ENCODE measurements at regions of chr2 and their contacts with region 1.

Region 1: DNA sequence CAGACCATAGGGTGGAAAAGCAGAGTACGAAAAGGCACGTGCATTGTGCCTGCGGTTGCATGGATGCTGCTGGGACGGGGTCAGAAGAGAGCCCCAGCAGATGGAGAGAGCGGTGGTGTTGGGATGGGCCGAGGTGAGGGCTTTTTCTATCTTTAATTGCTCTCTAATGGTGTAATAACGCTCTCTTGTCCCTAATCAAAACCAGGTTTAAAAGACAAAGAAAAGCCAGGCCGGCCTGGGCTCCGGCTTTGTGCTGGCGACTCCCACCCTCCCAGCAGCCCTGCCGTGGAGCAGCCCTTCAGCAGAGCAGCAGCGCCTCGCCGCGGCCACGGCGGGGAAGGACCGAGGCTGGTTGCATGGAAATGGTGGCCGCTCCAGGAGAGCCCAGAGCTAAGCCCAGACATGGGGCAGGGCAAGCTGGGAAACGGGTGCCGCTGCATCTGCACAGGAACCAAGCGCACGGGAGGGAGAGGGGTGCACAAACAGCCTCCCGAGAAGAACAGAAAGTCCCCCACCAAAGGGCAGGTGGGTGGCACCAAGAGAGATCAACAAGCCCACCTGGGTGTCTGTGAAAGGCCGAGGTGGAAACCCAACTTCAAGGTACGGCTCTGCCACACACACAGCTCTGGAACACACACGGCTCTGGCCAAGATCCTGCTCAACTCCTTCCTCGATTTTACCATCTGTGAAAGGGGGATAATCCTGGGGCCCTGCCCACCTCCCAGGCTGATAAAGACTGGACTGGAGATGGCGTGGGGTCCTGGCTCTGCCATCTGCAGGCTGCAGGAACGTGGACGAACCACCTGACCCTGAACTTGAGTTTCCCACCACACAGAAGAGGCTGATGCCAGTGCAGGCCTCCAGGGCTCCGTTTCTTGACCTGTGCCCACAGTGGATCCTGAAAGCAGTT is 15.0 kb downstream of the HS1BP3 start:
- DNase-seq: peak; percentile 71
- ATAC-seq: peak; percentile 99
- H3K4me3 ChIP-seq: no peak overlapping the region
- H3K27ac ChIP-seq: peak overlapping the region; percentile 41; the same call in 1 of the 2 replicates
- H3K4me1 ChIP-seq: peaks cover 11% of the 10 kb centered on the region
- H3K27me3 ChIP-seq: no peaks in the 10 kb centered on the region
- CTCF ChIP-seq: peak; percentile 99
- POLR2A ChIP-seq: peak; percentile 69
- RAD21 ChIP-seq: peak; percentile 100

Region 2: DNA sequence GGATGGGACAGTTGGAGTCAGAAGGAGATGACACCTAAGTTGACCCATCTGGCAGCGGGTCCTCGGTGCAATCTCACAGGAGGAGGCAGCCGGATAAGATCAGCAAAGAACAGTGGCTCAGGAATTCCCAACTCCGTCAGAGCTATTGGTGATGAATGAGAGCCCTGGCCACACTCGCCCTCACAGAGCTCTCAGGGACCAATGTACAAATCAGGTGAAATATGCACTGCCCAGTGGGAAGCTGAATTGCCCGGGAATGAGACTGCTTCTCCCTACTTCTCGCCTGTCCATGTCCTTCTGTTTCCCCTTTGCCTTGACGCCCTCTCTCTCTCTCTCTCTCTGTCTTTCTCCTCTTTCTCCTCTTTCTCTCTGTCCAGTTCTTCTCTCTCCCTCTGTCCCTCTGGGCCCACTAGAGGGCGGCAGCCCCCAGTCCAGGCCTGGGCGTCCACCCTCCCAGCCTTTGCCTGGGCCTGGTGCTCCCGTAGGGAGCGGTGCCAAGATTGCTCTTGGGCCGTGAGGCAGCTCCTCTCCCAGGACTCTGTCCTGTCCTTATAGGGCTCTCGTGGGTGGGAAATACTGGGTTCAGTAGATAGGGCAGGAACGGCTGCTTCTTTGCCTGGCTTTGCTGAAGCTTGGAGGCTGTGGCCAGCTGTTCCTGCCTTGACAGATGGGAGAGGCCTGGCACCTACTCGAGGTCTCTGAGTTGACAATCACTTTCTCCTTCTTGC is 257.0 kb before region 1 on chr2:
- CTCF ChIA-PET with region 1: interaction called, 5 read pairs
- POLR2A ChIA-PET with region 1: no interaction called
- dilution Hi-C with region 1: loop called (anchors 25 kb)
- in situ Hi-C with region 1: no loop called
- intact Hi-C with region 1: loop called (anchors 1 kb)
- DNase-seq: peak; percentile 86
- ATAC-seq: peak; percentile 97
- H3K4me3 ChIP-seq: no peak overlapping the region
- H3K27ac ChIP-seq: peak overlapping the region; percentile 46; the same call in 1 of the 2 replicates
- H3K4me1 ChIP-seq: peaks cover 19% of the 10 kb centered on the region
- H3K27me3 ChIP-seq: no peaks in the 10 kb centered on the region
- CTCF ChIP-seq: peak; percentile 92
- POLR2A ChIP-seq: 0 out of 2 replicates have a peak, but pooled peaks have one; percentile 36
- RAD21 ChIP-seq: peak; percentile 88

Region 3: DNA sequence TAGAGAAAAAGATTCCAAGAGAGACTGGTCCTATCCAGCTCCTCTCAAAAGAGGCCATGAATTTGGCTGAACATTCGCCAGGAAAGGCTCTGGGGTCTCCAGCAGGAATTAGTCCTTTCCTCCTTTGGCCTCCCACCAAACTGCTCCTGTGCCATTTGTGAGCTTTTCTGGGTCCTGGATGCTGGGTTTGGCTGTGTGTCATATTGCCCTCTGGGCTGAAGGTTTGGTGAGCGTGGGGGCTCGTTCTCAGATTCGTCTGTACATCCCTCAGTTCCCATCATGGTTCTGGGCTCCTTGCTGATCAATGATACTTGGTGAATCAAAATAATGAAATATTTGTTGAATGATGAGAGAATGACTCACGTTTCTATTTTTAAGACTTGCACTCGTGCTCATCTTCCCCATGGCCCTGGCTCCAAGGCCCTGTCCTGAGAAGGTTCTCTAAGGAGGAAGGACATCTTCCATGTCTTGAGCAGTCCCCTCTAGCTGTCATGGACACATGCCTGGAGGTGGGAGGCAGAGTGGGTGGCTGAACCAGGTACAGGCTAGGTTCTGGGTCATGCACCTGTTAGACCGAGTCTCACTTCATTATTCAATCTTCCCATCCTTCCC is 236.9 kb before region 1 on chr2:
- CTCF ChIA-PET with region 1: interaction called, 3 read pairs
- POLR2A ChIA-PET with region 1: no interaction called
- dilution Hi-C with region 1: loop called (anchors 25 kb)
- in situ Hi-C with region 1: loop called (anchors 5 kb)
- intact Hi-C with region 1: loop called (anchors 1 kb)
- DNase-seq: peak; percentile 68
- ATAC-seq: peak; percentile 63
- H3K4me3 ChIP-seq: no peak overlapping the region
- H3K27ac ChIP-seq: no peak overlapping the region
- H3K4me1 ChIP-seq: peaks cover 4% of the 10 kb centered on the region
- H3K27me3 ChIP-seq: peaks cover 7% of the 10 kb centered on the region; the same call in 1 of the 2 replicates
- CTCF ChIP-seq: no peak
- POLR2A ChIP-seq: no peak
- RAD21 ChIP-seq: no peak

Region 4: GRCh38 chr2:20507166-20507692 is 128.7 kb before region 1 on chr2:
- CTCF ChIA-PET with region 1: no interaction called
- POLR2A ChIA-PET with region 1: no interaction called
- dilution Hi-C with region 1: no loop called
- in situ Hi-C with region 1: no loop called
- intact Hi-C with region 1: loop called (anchors 5 kb)
- DNase-seq: peak; percentile 37
- ATAC-seq: no peak
- H3K4me3 ChIP-seq: no peak overlapping the region
- H3K27ac ChIP-seq: no peak overlapping the region
- H3K4me1 ChIP-seq: peaks cover 6% of the 10 kb centered on the region; the same call in 1 of the 2 replicates
- H3K27me3 ChIP-seq: no peaks in the 10 kb centered on the region
- CTCF ChIP-seq: no peak
- POLR2A ChIP-seq: no peak
- RAD21 ChIP-seq: no peak

Region 5: GRCh38 chr2:20600756-20601325 is 35.1 kb before region 1 on chr2:
- CTCF ChIA-PET with region 1: interaction called, 4 read pairs
- POLR2A ChIA-PET with region 1: no interaction called
- dilution Hi-C with region 1: no loop called
- in situ Hi-C with region 1: no loop called
- intact Hi-C with region 1: loop called (anchors 1 kb)
- DNase-seq: no peak
- ATAC-seq: no peak; the same call in 1 of the 2 replicates
- H3K4me3 ChIP-seq: no peak overlapping the region
- H3K27ac ChIP-seq: no peak overlapping the region
- H3K4me1 ChIP-seq: peaks cover 11% of the 10 kb centered on the region
- H3K27me3 ChIP-seq: no peaks in the 10 kb centered on the region
- CTCF ChIP-seq: peak; percentile 54
- POLR2A ChIP-seq: no peak
- RAD21 ChIP-seq: peak; percentile 49

Region 6: GRCh38 chr2:20617892-20618467 is 17.9 kb before region 1 on chr2:
- CTCF ChIA-PET with region 1: interaction called, 5 read pairs
- POLR2A ChIA-PET with region 1: no interaction called
- dilution Hi-C with region 1: no loop called
- in situ Hi-C with region 1: no loop called
- intact Hi-C with region 1: loop called (anchors 2 kb)
- DNase-seq: peak; percentile 100
- ATAC-seq: peak; percentile 96
- H3K4me3 ChIP-seq: no peak overlapping the region
- H3K27ac ChIP-seq: peak overlapping the region; percentile 91
- H3K4me1 ChIP-seq: peaks cover 25% of the 10 kb centered on the region
- H3K27me3 ChIP-seq: no peaks in the 10 kb centered on the region
- CTCF ChIP-seq: peak; percentile 60
- POLR2A ChIP-seq: peak; percentile 74
- RAD21 ChIP-seq: peak; percentile 61